OCI-LY7 (cell line): ENCODE measurements at regions of chr3 and their contacts with region 1.

Region 1: GRCh38 chr3:157081681-157082210 is 78.2 kb downstream of the CCNL1 start:
- DNase-seq: peak; percentile 79
- H3K4me3 ChIP-seq: no peak overlapping the region
- H3K27ac ChIP-seq: no peak overlapping the region
- H3K4me1 ChIP-seq: peaks cover 3% of the 10 kb centered on the region
- CTCF ChIP-seq: peak; percentile 96

Region 2: DNA sequence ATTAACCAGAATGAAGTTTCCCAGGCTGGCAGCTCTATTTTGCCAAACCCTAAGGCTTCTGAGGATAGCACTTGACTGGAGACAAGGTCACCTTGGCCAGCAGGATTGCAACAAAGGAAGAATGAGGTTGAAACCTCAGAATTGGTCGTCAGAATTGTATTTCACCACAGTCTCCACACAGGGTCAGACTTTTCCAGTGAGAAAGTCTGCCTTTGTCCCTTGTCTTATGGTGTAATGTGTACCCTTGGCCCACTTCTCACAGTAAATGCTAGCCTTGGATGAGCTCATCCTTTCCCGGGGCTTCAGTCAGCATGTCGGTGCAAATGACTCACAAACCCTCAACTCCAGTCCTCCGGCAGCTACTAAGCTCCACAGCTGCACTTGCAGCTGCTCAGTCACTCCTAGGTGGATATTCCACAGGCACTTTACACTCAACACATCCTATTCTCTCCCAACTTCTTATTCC is 546.6 kb before region 1 on chr3:
- CTCF ChIA-PET with region 1: no interaction called
- POLR2A ChIA-PET with region 1: no interaction called
- intact Hi-C with region 1: loop called (anchors 5 kb)
- DNase-seq: peak; percentile 7
- H3K4me3 ChIP-seq: no peak overlapping the region
- H3K27ac ChIP-seq: no peak overlapping the region
- H3K4me1 ChIP-seq: no peaks in the 10 kb centered on the region
- CTCF ChIP-seq: no peak; the same call in 1 of the 2 replicates

Region 3: DNA sequence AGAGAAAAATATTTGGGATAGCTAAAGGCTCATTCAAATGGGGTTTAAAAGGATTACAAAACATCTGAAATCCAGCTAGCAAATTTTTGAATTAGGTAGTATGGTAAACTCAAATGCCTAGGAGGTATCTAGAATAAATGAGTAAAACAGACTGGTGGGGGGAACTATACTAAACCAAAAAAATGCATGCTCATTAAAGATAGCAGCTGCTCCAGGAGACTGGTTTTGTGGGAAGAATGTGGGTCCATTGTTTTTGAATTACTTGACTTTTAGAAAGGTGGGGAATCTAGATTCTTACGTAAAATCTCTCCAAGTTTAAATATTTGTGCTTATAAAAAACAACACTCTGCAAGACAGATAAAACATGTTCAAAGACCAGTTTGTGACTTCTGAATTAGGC is 181.8 kb before region 1 on chr3:
- CTCF ChIA-PET with region 1: no interaction called
- POLR2A ChIA-PET with region 1: no interaction called
- intact Hi-C with region 1: loop called (anchors 5 kb)
- DNase-seq: no peak
- H3K4me3 ChIP-seq: no peak overlapping the region
- H3K27ac ChIP-seq: no peak overlapping the region
- H3K4me1 ChIP-seq: no peaks in the 10 kb centered on the region
- CTCF ChIP-seq: no peak

Region 4: DNA sequence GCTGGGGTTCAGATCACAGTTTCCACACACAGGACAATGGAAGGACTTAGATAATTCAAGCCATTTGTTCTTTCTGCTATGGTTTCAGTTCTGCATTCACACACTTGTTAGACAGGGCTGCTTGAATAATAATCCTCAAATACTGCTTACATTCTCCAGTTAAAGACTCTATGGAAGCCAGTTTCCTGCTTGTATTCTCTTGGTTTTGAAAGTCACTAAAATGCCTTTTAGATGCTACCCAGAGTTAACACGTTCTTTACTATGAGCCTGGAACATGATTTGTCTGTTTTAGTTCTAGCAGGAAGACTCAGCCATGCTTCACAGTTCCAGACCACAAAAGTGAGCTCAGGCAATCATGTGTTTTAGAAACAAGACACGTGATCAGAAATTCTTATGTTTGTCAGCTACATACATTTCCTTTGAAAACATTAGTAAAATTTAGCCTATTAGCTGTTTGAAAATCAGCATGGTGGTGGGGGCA is 103.2 kb before region 1 on chr3:
- CTCF ChIA-PET with region 1: interaction called, 3 read pairs
- POLR2A ChIA-PET with region 1: no interaction called
- intact Hi-C with region 1: loop called (anchors 5 kb)
- DNase-seq: peak; percentile 85
- H3K4me3 ChIP-seq: peak overlapping the region; percentile 30
- H3K27ac ChIP-seq: peak overlapping the region; percentile 60
- H3K4me1 ChIP-seq: peaks cover 21% of the 10 kb centered on the region
- CTCF ChIP-seq: no peak